ENCODE measurements at regions of chr1 and their contacts with region 1.

Region 1: GRCh38 chr1:64136752-64137411 is 66.5 kb upstream of the UBE2U start:
- DNase-seq: peak in 4 of 5 donors; percentile 64 to 77 (median 66)
- ATAC-seq: peak; percentile 53 to 87 (median 83)
- H3K4me3 ChIP-seq: no peak overlapping the region
- H3K27ac ChIP-seq: peak overlapping the region in 6 of 12 donors; percentile 4 to 55 (median 28)
- H3K4me1 ChIP-seq: peaks cover 0 to 24% (median 4%) of the 10 kb centered on the region in 12 donors
- H3K27me3 ChIP-seq: no peaks in the 10 kb centered on the region
- CTCF ChIP-seq: peak; percentile 77 to 94 (median 87)
- POLR2A ChIP-seq: no peak

Region 2: GRCh38 chr1:63615768-63616420 is 521.0 kb before region 1 on chr1:
- intact Hi-C with region 1: loop called in 8 of 10 experiments (anchors 2 to 10 kb)
- DNase-seq: peak in 3 of 5 donors; percentile 34 to 51 (median 45)
- ATAC-seq: peak; percentile 31 to 70 (median 60)
- H3K4me3 ChIP-seq: no peak overlapping the region
- H3K27ac ChIP-seq: peak overlapping the region in 2 of 12 donors; percentile 2 to 4
- H3K4me1 ChIP-seq: peaks cover 0 to 32% (median 4%) of the 10 kb centered on the region in 12 donors
- H3K27me3 ChIP-seq: no peaks in the 10 kb centered on the region
- CTCF ChIP-seq: peak; percentile 71 to 89 (median 78)
- POLR2A ChIP-seq: no peak

Region 3: DNA sequence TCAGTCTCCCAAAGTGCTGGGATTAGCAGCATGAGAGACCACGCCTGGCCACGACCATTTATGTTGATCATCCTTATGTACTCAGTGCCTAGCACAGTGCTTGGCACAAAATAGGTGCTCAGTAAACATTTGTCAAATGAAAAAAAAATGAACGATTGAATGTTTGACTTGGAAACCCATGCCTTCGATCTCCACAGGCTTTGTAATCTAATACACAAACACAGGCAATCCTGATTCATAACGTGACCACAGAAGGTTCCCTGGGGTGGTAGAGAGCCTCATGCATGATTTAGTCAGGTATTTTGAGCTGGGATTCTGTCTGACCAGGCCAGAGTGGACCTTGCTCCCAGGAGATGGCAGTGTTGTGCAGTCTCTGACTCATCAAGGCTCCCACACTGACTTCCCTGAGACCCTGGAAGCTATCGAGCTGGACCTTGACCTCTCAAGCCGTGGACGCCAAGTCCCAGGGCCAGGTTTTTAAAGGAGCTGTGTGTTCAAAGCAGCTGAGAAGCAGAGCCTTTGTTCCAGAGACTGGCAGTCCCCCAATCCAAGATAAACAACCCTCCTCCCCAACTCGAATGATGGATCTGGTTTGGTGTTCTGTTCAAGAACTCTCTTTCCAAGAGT is 462.5 kb before region 1 on chr1:
- intact Hi-C with region 1: loop called in 3 of 10 experiments (anchors 5 to 10 kb)
- DNase-seq: peak; percentile 65 to 81 (median 71)
- ATAC-seq: peak; percentile 88 to 96 (median 92)
- H3K4me3 ChIP-seq: no peak overlapping the region
- H3K27ac ChIP-seq: peak overlapping the region in 6 of 12 donors; percentile 31 to 43 (median 37)
- H3K4me1 ChIP-seq: peaks cover 0 to 10% (median 2%) of the 10 kb centered on the region in 12 donors
- H3K27me3 ChIP-seq: no peaks in the 10 kb centered on the region
- CTCF ChIP-seq: peak in 11 of 12 donors; percentile 39 to 73 (median 63)
- POLR2A ChIP-seq: no peak

Region 4: GRCh38 chr1:63935143-63935542 is 201.7 kb before region 1 on chr1:
- intact Hi-C with region 1: loop called in 7 of 10 experiments (anchors 2 to 10 kb)
- DNase-seq: peak in 2 of 5 donors; percentile 36 to 43
- ATAC-seq: peak; percentile 60 to 88 (median 66)
- H3K4me3 ChIP-seq: no peak overlapping the region
- H3K27ac ChIP-seq: peak overlapping the region in 7 of 12 donors; percentile 11 to 63 (median 46)
- H3K4me1 ChIP-seq: peaks cover 0 to 36% (median 9%) of the 10 kb centered on the region in 12 donors
- H3K27me3 ChIP-seq: no peaks in the 10 kb centered on the region
- CTCF ChIP-seq: peak in 10 of 12 donors; percentile 11 to 54 (median 28)
- POLR2A ChIP-seq: no peak

Region 5: GRCh38 chr1:64051796-64052195 is 85.1 kb before region 1 on chr1:
- intact Hi-C with region 1: loop called in 2 of 10 experiments (anchors 10 kb)
- DNase-seq: no peak
- ATAC-seq: peak in 3 of 4 donors; percentile 59 to 71 (median 68)
- H3K4me3 ChIP-seq: no peak overlapping the region
- H3K27ac ChIP-seq: peak overlapping the region in 8 of 12 donors; percentile 1 to 70 (median 30)
- H3K4me1 ChIP-seq: peaks cover 0 to 33% (median 5%) of the 10 kb centered on the region in 12 donors
- H3K27me3 ChIP-seq: no peaks in the 10 kb centered on the region
- CTCF ChIP-seq: no peak
- POLR2A ChIP-seq: no peak

Region 6: GRCh38 chr1:64212031-64212430 is 75.1 kb after region 1 on chr1:
- intact Hi-C with region 1: no loop called
- DNase-seq: no peak
- ATAC-seq: no peak
- H3K4me3 ChIP-seq: no peak overlapping the region
- H3K27ac ChIP-seq: no peak overlapping the region
- H3K4me1 ChIP-seq: no peaks in the 10 kb centered on the region
- H3K27me3 ChIP-seq: no peaks in the 10 kb centered on the region
- CTCF ChIP-seq: no peak
- POLR2A ChIP-seq: no peak

Measured in heart left ventricle (tissue), 16 donors.